ENCODE measurements at regions of chr1 and their contacts with region 1.

Region 1: DNA sequence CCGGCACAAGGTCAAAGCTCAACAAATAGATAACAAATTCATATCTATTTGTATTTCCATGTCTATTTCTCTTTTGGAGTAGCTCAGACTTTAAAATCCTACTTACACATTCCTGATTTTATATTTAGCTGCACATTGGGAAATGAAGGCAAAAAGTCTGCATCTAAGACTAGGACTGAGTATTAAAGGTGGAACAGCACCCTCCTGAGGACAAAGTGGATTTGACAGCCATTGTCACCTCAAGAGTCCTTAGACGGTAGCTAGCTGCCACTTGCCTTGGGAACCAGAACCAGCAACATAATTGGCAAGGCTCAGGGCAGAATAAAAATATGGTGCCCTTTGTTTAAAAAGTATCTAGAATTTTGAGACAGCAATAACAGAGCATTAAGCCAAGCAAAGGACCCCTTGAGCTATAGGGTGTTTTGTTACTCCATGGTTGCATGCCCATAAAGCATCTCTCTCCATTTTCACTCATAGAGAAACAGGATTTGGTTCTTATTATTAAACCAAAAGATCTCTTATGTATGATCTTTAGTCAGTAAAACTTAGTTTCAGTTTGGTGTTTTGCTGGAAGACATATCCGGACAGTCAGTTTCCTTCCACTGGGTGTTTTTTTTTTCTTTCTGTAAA is 30.0 kb upstream of the SGIP1 start:
- DNase-seq: peak; percentile 33
- ATAC-seq: peak; percentile 93

Region 2: DNA sequence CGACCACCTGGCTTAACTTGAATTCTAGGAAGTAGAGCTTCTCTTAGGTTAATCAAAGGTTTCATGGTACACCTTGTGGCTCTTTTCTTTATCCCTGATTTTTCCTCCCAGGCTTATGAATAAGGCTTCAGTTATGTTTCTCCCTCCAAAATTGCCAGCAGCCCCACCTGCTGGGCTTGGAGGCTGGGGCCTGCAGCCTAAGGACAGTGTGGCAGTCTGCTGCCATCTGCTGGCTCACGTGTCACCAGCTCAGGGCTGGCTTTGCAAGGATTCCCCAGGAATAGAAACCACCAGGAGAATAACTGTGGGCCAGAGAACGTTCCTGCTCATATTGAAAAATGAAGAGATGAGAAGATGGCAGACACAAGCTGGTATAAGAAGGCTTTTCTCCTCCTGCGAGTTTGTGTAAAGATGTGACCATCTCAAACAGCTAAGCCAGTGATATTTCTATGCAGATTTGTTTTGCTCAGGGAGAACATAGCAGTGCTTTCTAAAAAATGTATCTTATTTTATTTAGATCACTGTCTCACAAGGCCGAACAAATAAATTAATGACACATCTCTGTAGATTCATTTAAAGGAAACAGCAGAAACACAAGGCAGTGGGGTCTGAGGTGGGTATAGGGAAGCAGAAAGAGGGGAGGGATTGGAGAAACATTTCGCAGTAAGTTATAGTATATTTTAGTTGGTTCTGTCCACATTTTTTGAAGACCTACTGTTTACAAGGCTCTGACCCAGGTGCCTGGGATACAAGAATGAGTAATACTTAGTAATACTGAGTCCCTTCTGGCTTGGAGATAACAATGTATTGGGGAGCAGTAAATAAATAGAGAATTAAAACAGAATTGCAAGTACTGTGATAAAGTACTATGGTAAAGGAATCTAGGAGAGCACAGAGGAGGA is 261.1 kb before region 1 on chr1:
- intact Hi-C with region 1: loop called (anchors 5 kb)
- DNase-seq: peak; percentile 89
- ATAC-seq: peak; percentile 99

Region 3: DNA sequence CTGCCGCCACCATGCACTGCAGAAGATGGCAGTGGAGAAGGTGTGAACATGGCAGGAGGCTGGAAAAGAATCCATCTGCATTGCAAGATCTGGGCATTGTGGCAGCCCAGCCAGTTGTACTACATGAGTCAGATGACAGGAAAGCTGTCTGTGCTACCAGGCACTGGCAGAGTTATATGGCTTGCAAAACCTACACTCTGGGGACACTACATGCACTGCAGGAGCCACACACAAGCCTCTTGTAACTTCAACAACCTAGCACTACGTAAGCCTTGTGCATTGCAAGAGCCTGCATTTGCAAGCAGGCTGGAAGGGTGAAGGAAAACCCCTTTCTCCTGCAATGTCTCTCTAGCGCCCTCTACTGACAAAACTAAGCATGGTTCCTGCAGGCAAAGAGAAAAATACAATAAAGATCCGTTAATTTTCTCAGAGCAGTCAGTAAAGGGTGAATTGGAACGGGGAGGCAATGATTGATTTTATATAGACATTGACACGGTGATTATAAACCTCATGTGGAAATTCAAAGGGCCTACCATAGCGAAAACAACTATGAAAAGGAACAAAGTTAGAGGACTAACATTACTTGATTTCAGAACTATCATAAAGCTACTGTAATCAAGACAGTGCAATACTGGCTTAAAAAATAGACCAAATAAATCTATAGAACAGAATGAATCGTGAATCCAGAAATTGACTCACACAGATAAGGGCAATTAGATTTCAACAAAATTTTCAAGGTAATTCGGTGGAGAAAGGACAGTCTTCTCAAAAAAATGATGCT is 222.1 kb after region 1 on chr1:
- intact Hi-C with region 1: loop called (anchors 10 kb)
- DNase-seq: no peak
- ATAC-seq: peak; percentile 80

Measured in Right ventricle myocardium superior (tissue), 1 donor.